ENCODE measurements at regions of chr6 and their contacts with region 1.

Region 1: DNA sequence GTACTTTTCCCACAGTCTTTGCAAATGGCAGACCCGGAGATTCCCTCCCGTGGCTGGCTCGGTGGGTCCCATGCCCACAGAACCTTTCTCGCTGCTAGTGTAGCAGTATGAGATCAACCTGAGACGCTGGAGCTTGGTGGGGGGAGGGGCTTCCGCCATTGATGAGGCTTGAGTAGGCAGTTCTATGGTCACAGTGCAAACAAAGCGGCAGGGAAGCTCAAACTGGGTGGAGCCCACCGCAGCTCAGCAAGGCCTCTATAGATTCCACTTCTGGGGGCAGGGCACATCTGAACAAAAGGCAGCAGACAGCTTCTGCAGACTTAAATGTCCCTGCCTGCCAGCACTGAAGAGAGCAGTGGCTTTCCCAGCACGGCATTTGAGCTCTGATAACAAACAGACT is 186.0 kb upstream of the KCNK16 start:
- DNase-seq: no peak
- CTCF ChIP-seq: no peak

Region 2: DNA sequence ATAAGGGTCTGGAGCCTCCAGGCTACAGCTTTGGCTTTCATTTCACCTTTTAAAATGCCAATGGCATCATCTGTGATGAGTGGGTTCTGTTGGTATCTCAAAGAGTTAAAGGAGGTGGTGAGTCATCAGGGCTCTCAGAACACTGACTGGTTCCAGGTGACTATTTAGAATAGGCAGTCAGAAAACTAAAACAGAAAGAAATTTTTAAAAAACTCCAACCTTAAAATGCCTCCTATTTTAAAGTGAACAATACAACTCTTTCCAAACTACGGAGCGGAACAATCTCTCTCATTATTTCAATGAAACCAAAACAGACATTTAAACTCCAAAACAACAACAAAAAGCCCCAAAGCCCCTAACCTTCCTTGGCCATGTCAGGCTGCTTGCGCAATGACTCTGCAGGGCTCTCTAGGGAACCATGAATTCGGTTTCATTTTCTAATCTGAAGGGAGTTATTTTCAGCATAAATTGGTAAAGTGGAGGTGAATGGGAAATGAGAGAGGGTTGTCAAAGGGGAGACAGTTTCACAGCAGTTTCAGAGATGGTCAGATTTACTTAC is 21.8 kb after region 1 on chr6:
- CTCF ChIA-PET with region 1: no interaction called
- POLR2A ChIA-PET with region 1: interaction called, 14 read pairs
- DNase-seq: peak; percentile 80
- CTCF ChIP-seq: no peak

Region 3: GRCh38 chr6:39688494-39688893 is 180.0 kb after region 1 on chr6:
- CTCF ChIA-PET with region 1: no interaction called
- POLR2A ChIA-PET with region 1: no interaction called
- DNase-seq: no peak
- CTCF ChIP-seq: no peak